ENCODE measurements at regions of chr5 and their contacts with region 1.

Region 1: GRCh38 chr5:56909294-56910209 is at the start of gene SETD9:
- DNase-seq: peak; percentile 98
- H3K4me3 ChIP-seq: peak within 1 kb of the TSS; percentile 76
- H3K27ac ChIP-seq: peak within 1 kb of the TSS; percentile 77
- H3K4me1 ChIP-seq: peaks cover 21% of the 10 kb centered on the region
- CTCF ChIP-seq: no peak
- total RNA-seq, gene SETD9: 5.0 and 6.7 TPM in 2 replicates

Region 2: GRCh38 chr5:56881571-56881970 is 28.0 kb before region 1 on chr5:
- CTCF ChIA-PET with region 1: no interaction called
- POLR2A ChIA-PET with region 1: no interaction called
- intact Hi-C with region 1: no loop called
- DNase-seq: no peak
- H3K4me3 ChIP-seq: no peak overlapping the region
- H3K27ac ChIP-seq: no peak overlapping the region
- H3K4me1 ChIP-seq: no peaks in the 10 kb centered on the region
- CTCF ChIP-seq: no peak

Region 3: GRCh38 chr5:56951946-56952691 is 42.6 kb after region 1 on chr5 and contains the start of gene MIER3:
- CTCF ChIA-PET with region 1: no interaction called
- POLR2A ChIA-PET with region 1: interaction called, 20 read pairs
- intact Hi-C with region 1: loop called (anchors 1 kb)
- DNase-seq: peak; percentile 85
- H3K4me3 ChIP-seq: peak within 1 kb of the TSS; percentile 96
- H3K27ac ChIP-seq: peak within 1 kb of the TSS; percentile 42
- H3K4me1 ChIP-seq: peaks cover 16% of the 10 kb centered on the region
- CTCF ChIP-seq: no peak
- total RNA-seq, gene MIER3: 12.6 and 51.9 TPM in 2 replicates

Region 4: DNA sequence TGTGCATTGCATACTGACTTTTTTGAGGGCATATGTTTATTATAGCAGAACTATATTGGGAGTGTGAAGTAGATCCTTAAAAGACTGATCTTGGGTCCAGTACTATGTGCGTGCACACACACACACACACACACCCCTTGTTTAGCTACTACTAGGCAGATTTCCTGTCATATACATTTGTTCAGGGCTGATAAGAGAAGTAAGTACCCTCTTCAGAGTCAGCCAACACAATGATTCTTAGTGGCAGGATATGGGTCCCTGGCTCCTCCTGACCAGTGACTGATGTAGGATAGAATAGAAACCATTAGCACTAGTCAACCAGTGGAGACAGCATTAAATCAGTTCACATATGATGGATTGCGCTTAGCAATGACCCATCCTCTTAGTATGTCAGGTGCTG is 118.6 kb after region 1 on chr5:
- CTCF ChIA-PET with region 1: no interaction called
- POLR2A ChIA-PET with region 1: no interaction called
- intact Hi-C with region 1: no loop called
- DNase-seq: no peak
- H3K4me3 ChIP-seq: no peak overlapping the region
- H3K27ac ChIP-seq: no peak overlapping the region
- H3K4me1 ChIP-seq: peaks cover 30% of the 10 kb centered on the region
- CTCF ChIP-seq: no peak